ENCODE measurements at regions of chr11 and their contacts with region 1.

Region 1: GRCh38 chr11:1827095-1827813 is 7.5 kb upstream of the SYT8 start:
- DNase-seq: peak; percentile 95
- H3K4me3 Mint-ChIP-seq: peak overlapping the region; percentile 43
- H3K27ac Mint-ChIP-seq: peak overlapping the region; percentile 33
- H3K4me1 Mint-ChIP-seq: peaks cover 47% of the 10 kb centered on the region
- H3K27me3 Mint-ChIP-seq: no peaks in the 10 kb centered on the region
- CTCF ChIP-seq: no peak

Region 2: GRCh38 chr11:1749414-1750312 is 77.6 kb before region 1 on chr11:
- CTCF ChIA-PET with region 1: interaction called, 26 read pairs
- POLR2A ChIA-PET with region 1: interaction called, 107 read pairs
- intact Hi-C with region 1: loop called (anchors 5 kb)
- DNase-seq: peak; percentile 72
- H3K4me3 Mint-ChIP-seq: peak overlapping the region; percentile 73
- H3K27ac Mint-ChIP-seq: peak overlapping the region; percentile 74
- H3K4me1 Mint-ChIP-seq: peaks cover 20% of the 10 kb centered on the region
- H3K27me3 Mint-ChIP-seq: no peaks in the 10 kb centered on the region
- CTCF ChIP-seq: no peak

Region 3: GRCh38 chr11:1763796-1764661 is 63.2 kb before region 1 on chr11 and contains the start of gene CTSD:
- CTCF ChIA-PET with region 1: interaction called, 45 read pairs
- POLR2A ChIA-PET with region 1: interaction called, 115 read pairs
- intact Hi-C with region 1: loop called (anchors 1 kb)
- DNase-seq: peak; percentile 76
- H3K4me3 Mint-ChIP-seq: peak within 1 kb of the TSS; percentile 77
- H3K27ac Mint-ChIP-seq: peak within 1 kb of the TSS; percentile 39
- H3K4me1 Mint-ChIP-seq: peaks cover 10% of the 10 kb centered on the region
- H3K27me3 Mint-ChIP-seq: no peaks in the 10 kb centered on the region
- CTCF ChIP-seq: no peak
- total RNA-seq, gene CTSD: 366 and 367 TPM in 2 replicates

Region 4: GRCh38 chr11:1772270-1773130 is 54.8 kb before region 1 on chr11:
- CTCF ChIA-PET with region 1: interaction called, 25 read pairs
- POLR2A ChIA-PET with region 1: interaction called, 54 read pairs
- intact Hi-C with region 1: no loop called
- DNase-seq: peak; percentile 91
- H3K4me3 Mint-ChIP-seq: peak overlapping the region; percentile 60
- H3K27ac Mint-ChIP-seq: peak overlapping the region; percentile 80
- H3K4me1 Mint-ChIP-seq: peaks cover 39% of the 10 kb centered on the region
- H3K27me3 Mint-ChIP-seq: no peaks in the 10 kb centered on the region
- CTCF ChIP-seq: no peak

Region 5: DNA sequence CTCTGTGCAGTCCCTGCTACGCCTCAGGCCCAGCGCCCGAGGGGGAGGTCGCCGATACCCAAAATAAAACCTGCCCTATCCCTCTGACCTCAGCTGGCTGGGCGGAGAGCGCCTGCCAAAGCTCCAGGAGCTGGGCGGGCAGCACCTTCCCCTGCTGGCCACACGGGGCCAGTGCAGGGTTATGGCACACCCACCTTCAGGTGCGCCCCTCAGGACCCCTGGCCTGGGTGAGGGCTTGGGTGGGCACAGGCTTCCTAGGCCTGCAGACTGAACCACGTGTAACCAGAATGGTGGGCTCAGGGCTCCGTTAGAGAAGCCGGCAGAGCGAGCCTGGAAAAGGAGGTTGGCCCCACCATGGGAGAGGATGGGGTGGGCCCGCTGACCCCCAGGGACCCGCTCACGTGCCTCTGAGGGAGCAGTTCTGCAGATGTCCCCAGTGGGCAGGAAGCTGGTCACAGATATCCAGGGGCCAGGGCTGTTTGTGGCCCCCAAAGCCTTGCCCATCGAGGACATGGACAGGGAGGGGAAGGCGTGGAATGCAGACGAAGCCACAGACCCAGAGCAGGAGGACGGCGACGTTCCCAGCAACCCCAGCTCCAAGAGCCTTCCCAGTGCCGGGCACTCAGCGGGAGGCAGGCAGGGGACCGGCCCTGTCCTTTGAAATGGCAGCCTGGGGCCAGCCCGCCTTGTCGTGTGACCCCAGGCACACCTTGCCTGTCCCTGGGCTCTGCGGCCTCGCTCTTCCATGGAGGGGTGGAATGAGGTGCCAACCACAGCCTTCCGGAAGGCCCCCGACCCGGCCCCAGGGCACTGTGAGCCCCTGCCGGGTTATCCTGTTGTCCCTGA is 90.6 kb after region 1 on chr11:
- CTCF ChIA-PET with region 1: no interaction called
- POLR2A ChIA-PET with region 1: no interaction called
- intact Hi-C with region 1: no loop called
- DNase-seq: no peak
- H3K4me3 Mint-ChIP-seq: no peak overlapping the region
- H3K27ac Mint-ChIP-seq: no peak overlapping the region
- H3K4me1 Mint-ChIP-seq: no peaks in the 10 kb centered on the region
- H3K27me3 Mint-ChIP-seq: peaks cover 25% of the 10 kb centered on the region
- CTCF ChIP-seq: peak; percentile 38

Region 6: DNA sequence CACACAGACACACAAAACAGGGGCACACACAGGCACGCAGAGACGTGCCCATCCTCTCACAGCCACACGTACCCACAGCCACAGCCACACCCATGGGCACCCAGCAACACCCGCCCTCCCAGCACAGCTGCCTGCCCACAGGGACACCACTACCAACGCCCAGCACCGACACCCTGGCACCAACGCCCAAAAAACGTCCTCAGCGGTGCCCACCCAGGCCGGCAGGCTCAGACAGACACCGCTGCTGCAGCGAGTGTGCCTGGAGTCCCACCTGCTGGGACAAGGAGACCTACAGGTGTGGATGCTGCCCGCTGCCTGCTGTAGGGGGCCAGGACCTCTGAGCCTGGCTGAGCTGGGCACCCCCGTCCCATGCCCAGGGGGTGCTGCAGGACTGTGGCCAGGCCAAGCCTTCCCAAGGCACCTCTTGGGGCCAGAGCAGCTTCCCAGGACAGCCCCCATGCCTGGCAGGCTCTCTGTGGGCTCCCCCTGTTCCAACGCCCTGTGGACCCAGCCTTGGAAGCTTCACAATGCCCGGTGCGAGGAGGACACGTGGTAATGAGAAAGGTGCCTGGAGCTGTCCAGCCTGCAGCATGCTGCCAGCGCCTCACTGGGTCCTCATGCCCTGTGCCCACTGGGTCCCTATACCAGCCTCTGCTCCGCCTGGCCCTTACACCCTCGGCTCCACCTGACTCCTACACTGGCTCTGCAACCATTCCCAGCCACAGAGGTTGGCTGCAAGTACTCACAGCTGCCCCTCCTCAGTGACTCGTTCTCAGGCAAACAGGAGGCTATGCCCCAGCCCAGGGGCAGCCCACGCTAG is 390.2 kb after region 1 on chr11:
- CTCF ChIA-PET with region 1: no interaction called
- POLR2A ChIA-PET with region 1: no interaction called
- intact Hi-C with region 1: no loop called
- DNase-seq: no peak
- H3K4me3 Mint-ChIP-seq: no peak overlapping the region
- H3K27ac Mint-ChIP-seq: no peak overlapping the region
- H3K4me1 Mint-ChIP-seq: no peaks in the 10 kb centered on the region
- H3K27me3 Mint-ChIP-seq: peaks cover 26% of the 10 kb centered on the region
- CTCF ChIP-seq: no peak

Region 7: GRCh38 chr11:2428322-2428795 is 601.1 kb after region 1 on chr11:
- CTCF ChIA-PET with region 1: no interaction called
- POLR2A ChIA-PET with region 1: no interaction called
- intact Hi-C with region 1: no loop called
- DNase-seq: peak; percentile 68
- H3K4me3 Mint-ChIP-seq: no peak overlapping the region
- H3K27ac Mint-ChIP-seq: no peak overlapping the region
- H3K4me1 Mint-ChIP-seq: no peaks in the 10 kb centered on the region
- H3K27me3 Mint-ChIP-seq: no peaks in the 10 kb centered on the region
- CTCF ChIP-seq: peak; percentile 88